ENCODE measurements at regions of chr2 and their contacts with region 1.

Region 1: GRCh38 chr2:73176881-73177644 is 25.3 kb upstream of the NOTO start:
- DNase-seq: peak; percentile 43 to 97
- H3K4me3 ChIP-seq: peak overlapping the region; percentile 24 to 64 (median 54); a peak in 7 of 8 replicates
- H3K27ac ChIP-seq: no peak overlapping the region
- H3K4me1 ChIP-seq: peaks cover 2 to 23% (median 11%) of the 10 kb centered on the region in 4 experiments; a peak in 6 of 7 replicates
- H3K27me3 ChIP-seq: peaks cover 22 to 59% (median 45%) of the 10 kb centered on the region in 4 experiments
- CTCF ChIP-seq: peak; percentile 87 to 99 (median 96)
- EP300 ChIP-seq: peak in 1 of 2 experiments; percentile 20; a peak in 1 of 3 replicates
- POLR2A ChIP-seq: no peak
- RAD21 ChIP-seq: peak; percentile 87 to 90

Region 2: GRCh38 chr2:72973566-72974435 is 203.3 kb before region 1 on chr2:
- CTCF ChIA-PET with region 1: interaction called, 12 read pairs
- POLR2A ChIA-PET with region 1: no interaction called
- DNase-seq: peak in 1 of 2 experiments; percentile 85
- H3K4me3 ChIP-seq: no peak overlapping the region
- H3K27ac ChIP-seq: no peak overlapping the region
- H3K4me1 ChIP-seq: peaks cover 5 to 21% (median 17%) of the 10 kb centered on the region in 4 experiments
- H3K27me3 ChIP-seq: no peaks in the 10 kb centered on the region; a peak in 1 of 7 replicates
- CTCF ChIP-seq: peak; percentile 93 to 95 (median 94)
- EP300 ChIP-seq: no peak
- POLR2A ChIP-seq: no peak
- RAD21 ChIP-seq: peak; percentile 86 to 89

Region 3: GRCh38 chr2:73080711-73081131 is 96.3 kb before region 1 on chr2:
- CTCF ChIA-PET with region 1: interaction called, 31 read pairs
- POLR2A ChIA-PET with region 1: interaction called, 4 read pairs
- DNase-seq: no peak
- H3K4me3 ChIP-seq: no peak overlapping the region
- H3K27ac ChIP-seq: no peak overlapping the region
- H3K4me1 ChIP-seq: peaks cover 0 to 9% (median 5%) of the 10 kb centered on the region in 4 experiments; a peak in 6 of 7 replicates
- H3K27me3 ChIP-seq: no peaks in the 10 kb centered on the region
- CTCF ChIP-seq: no peak
- EP300 ChIP-seq: no peak
- POLR2A ChIP-seq: no peak
- RAD21 ChIP-seq: no peak

Region 4: GRCh38 chr2:73100956-73101355 is 76.1 kb before region 1 on chr2:
- CTCF ChIA-PET with region 1: interaction called, 16 read pairs
- POLR2A ChIA-PET with region 1: no interaction called
- DNase-seq: no peak
- H3K4me3 ChIP-seq: no peak overlapping the region
- H3K27ac ChIP-seq: no peak overlapping the region
- H3K4me1 ChIP-seq: peaks cover 4 to 11% (median 9%) of the 10 kb centered on the region in 4 experiments; a peak in 5 of 7 replicates
- H3K27me3 ChIP-seq: no peaks in the 10 kb centered on the region
- CTCF ChIP-seq: no peak
- EP300 ChIP-seq: no peak
- POLR2A ChIP-seq: no peak
- RAD21 ChIP-seq: no peak

Region 5: GRCh38 chr2:73163483-73164367 is 13.3 kb before region 1 on chr2:
- CTCF ChIA-PET with region 1: interaction called, 19 read pairs
- POLR2A ChIA-PET with region 1: interaction called, 3 read pairs
- DNase-seq: peak; percentile 63 to 92
- H3K4me3 ChIP-seq: no peak overlapping the region
- H3K27ac ChIP-seq: no peak overlapping the region
- H3K4me1 ChIP-seq: no peaks in the 10 kb centered on the region
- H3K27me3 ChIP-seq: no peaks in the 10 kb centered on the region
- CTCF ChIP-seq: peak; percentile 87 to 91 (median 89)
- EP300 ChIP-seq: no peak
- POLR2A ChIP-seq: no peak
- RAD21 ChIP-seq: peak; percentile 91

Region 6: GRCh38 chr2:73212448-73213176 is 35.5 kb after region 1 on chr2:
- CTCF ChIA-PET with region 1: interaction called, 92 read pairs
- POLR2A ChIA-PET with region 1: interaction called, 16 read pairs
- DNase-seq: peak in 1 of 2 experiments; percentile 90
- H3K4me3 ChIP-seq: no peak overlapping the region
- H3K27ac ChIP-seq: no peak overlapping the region
- H3K4me1 ChIP-seq: peaks cover 2 to 3% (median 3%) of the 10 kb centered on the region in 4 experiments; a peak in 4 of 7 replicates
- H3K27me3 ChIP-seq: peaks cover 0 to 4% (median 2%) of the 10 kb centered on the region in 4 experiments; a peak in 1 of 7 replicates
- CTCF ChIP-seq: peak; percentile 85 to 98 (median 97)
- EP300 ChIP-seq: no peak
- POLR2A ChIP-seq: no peak
- RAD21 ChIP-seq: peak; percentile 79 to 87

Region 7: GRCh38 chr2:73451263-73451972 is 274.4 kb after region 1 on chr2:
- CTCF ChIA-PET with region 1: no interaction called
- POLR2A ChIA-PET with region 1: no interaction called
- DNase-seq: no peak
- H3K4me3 ChIP-seq: no peak overlapping the region
- H3K27ac ChIP-seq: no peak overlapping the region
- H3K4me1 ChIP-seq: no peaks in the 10 kb centered on the region
- H3K27me3 ChIP-seq: no peaks in the 10 kb centered on the region
- CTCF ChIP-seq: no peak
- EP300 ChIP-seq: no peak
- POLR2A ChIP-seq: no peak
- RAD21 ChIP-seq: no peak